Activated CD4-positive, alpha-beta memory T cell treated with anti-CD3 and anti-CD28 coated beads for 36 hours (primary cell): ENCODE measurements at regions of chr5 and their contacts with region 1.

Region 1: GRCh38 chr5:145936401-145937131 is at the start of gene SH3RF2:
- DNase-seq: peak; percentile 68
- H3K4me3 Mint-ChIP-seq: peak within 1 kb of the TSS; percentile 42
- H3K27ac Mint-ChIP-seq: no peak within 1 kb of the TSS
- H3K4me1 Mint-ChIP-seq: peaks cover 26% of the 10 kb centered on the region
- H3K27me3 Mint-ChIP-seq: peaks cover 49% of the 10 kb centered on the region
- total RNA-seq, gene SH3RF2: 0.12 TPM in 1 of 2 experiments, not detected in the other

Region 2: GRCh38 chr5:145711417-145711816 is 225.1 kb before region 1 on chr5:
- CTCF ChIA-PET with region 1: no interaction called
- POLR2A ChIA-PET with region 1: no interaction called
- intact Hi-C with region 1: no loop called
- DNase-seq: no peak
- H3K4me3 Mint-ChIP-seq: no peak overlapping the region
- H3K27ac Mint-ChIP-seq: no peak overlapping the region
- H3K4me1 Mint-ChIP-seq: no peaks in the 10 kb centered on the region
- H3K27me3 Mint-ChIP-seq: no peaks in the 10 kb centered on the region

Region 3: GRCh38 chr5:145834917-145835847 is 101.4 kb before region 1 on chr5 and contains the start of gene PRELID2:
- CTCF ChIA-PET with region 1: no interaction called
- POLR2A ChIA-PET with region 1: no interaction called
- intact Hi-C with region 1: loop called (anchors 2 kb)
- DNase-seq: peak; percentile 76
- H3K4me3 Mint-ChIP-seq: peak within 1 kb of the TSS; percentile 53
- H3K27ac Mint-ChIP-seq: no peak within 1 kb of the TSS
- H3K4me1 Mint-ChIP-seq: peaks cover 11% of the 10 kb centered on the region
- H3K27me3 Mint-ChIP-seq: peaks cover 7% of the 10 kb centered on the region
- total RNA-seq, gene PRELID2: 3.8 to 4.3 TPM

Region 4: GRCh38 chr5:145921211-145921610 is 15.4 kb before region 1 on chr5:
- CTCF ChIA-PET with region 1: no interaction called
- POLR2A ChIA-PET with region 1: no interaction called
- intact Hi-C with region 1: loop called (anchors 2 kb)
- DNase-seq: no peak
- H3K4me3 Mint-ChIP-seq: no peak overlapping the region
- H3K27ac Mint-ChIP-seq: no peak overlapping the region
- H3K4me1 Mint-ChIP-seq: no peaks in the 10 kb centered on the region
- H3K27me3 Mint-ChIP-seq: peaks cover 3% of the 10 kb centered on the region

Region 5: GRCh38 chr5:145953202-145953601 is 16.6 kb after region 1 on chr5:
- CTCF ChIA-PET with region 1: no interaction called
- POLR2A ChIA-PET with region 1: no interaction called
- intact Hi-C with region 1: loop called (anchors 2 kb)
- DNase-seq: no peak
- H3K4me3 Mint-ChIP-seq: no peak overlapping the region
- H3K27ac Mint-ChIP-seq: no peak overlapping the region
- H3K4me1 Mint-ChIP-seq: no peaks in the 10 kb centered on the region
- H3K27me3 Mint-ChIP-seq: peaks cover 19% of the 10 kb centered on the region

Region 6: DNA sequence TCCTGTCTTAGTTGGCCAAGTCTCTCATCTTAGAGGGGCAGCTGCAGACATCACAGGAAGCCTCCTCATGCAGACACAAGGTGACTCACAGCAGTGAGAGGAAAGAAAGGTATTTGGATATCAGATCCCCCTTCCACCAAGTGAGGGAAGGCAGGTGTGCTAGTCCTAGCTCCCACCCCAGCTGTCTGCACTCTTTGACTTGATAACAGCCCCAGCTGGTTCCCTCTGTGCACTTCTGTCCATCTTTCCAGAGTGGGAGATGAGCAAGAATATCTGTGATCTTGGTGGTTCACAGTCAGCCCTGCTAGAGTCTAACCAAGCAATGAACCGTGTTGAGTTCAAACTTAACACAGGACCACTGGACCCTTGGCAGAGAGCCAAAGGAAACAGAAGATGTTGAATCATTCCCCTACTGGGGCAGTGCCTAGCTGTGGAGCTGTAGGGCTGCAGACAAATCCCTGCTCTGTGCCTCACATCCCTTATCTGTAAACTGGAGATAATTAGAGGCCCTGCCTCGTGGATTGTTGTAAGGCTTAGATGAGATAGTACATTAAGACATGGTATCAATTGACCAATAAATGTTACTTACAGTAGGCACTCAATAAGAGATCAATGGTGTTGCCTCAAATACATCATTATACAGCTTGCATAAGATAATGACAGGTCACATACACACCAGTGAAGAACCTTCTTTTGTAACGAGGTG is 38.9 kb after region 1 on chr5:
- CTCF ChIA-PET with region 1: no interaction called
- POLR2A ChIA-PET with region 1: interaction called, 3 read pairs
- intact Hi-C with region 1: loop called (anchors 5 kb)
- DNase-seq: peak; percentile 10
- H3K4me3 Mint-ChIP-seq: no peak overlapping the region
- H3K27ac Mint-ChIP-seq: no peak overlapping the region
- H3K4me1 Mint-ChIP-seq: no peaks in the 10 kb centered on the region
- H3K27me3 Mint-ChIP-seq: peaks cover 2% of the 10 kb centered on the region

Region 7: DNA sequence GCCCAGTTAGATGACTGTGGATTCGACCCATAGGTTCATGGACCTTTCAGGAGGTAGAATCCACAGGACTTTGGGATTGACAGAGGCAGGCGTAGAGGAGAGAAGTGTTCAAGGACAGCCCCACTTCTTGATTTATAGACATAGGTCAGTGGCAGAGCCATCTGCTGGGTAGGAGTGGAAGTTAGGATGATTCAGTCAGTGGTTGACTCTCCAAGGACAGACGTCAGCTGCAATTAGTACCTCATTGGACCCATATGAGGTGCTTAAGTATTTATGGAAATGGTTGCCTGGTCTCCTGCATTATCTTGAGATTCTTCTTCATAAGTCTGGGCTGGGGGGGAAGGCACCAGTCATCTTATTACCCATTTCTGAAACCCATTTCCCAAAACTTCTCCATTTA is 70.7 kb after region 1 on chr5:
- CTCF ChIA-PET with region 1: no interaction called
- POLR2A ChIA-PET with region 1: no interaction called
- intact Hi-C with region 1: no loop called
- DNase-seq: no peak
- H3K4me3 Mint-ChIP-seq: no peak overlapping the region
- H3K27ac Mint-ChIP-seq: no peak overlapping the region
- H3K4me1 Mint-ChIP-seq: no peaks in the 10 kb centered on the region
- H3K27me3 Mint-ChIP-seq: no peaks in the 10 kb centered on the region

Region 8: DNA sequence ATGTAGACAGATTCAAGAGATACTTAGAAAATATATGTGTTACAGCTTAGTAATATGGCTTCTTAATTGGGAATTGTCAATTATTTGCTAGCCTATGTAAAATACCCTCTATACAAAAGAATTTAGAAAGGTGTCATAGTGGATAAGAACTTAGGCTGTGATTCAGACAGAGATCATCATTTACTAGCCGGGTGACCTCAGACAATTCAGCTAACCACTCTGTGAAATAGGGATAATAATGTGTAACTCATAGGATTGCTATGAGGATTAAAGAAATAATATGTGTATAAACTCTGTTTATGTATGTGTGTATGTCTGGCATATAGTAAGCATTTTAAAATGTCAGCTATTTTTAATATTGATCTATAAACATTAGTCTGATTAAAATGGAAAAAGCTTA is 251.8 kb after region 1 on chr5:
- CTCF ChIA-PET with region 1: no interaction called
- POLR2A ChIA-PET with region 1: no interaction called
- intact Hi-C with region 1: loop called (anchors 2 kb)
- DNase-seq: no peak
- H3K4me3 Mint-ChIP-seq: no peak overlapping the region
- H3K27ac Mint-ChIP-seq: no peak overlapping the region
- H3K4me1 Mint-ChIP-seq: peaks cover 8% of the 10 kb centered on the region
- H3K27me3 Mint-ChIP-seq: peaks cover 8% of the 10 kb centered on the region